ENCODE measurements at regions of chr13 and their contacts with region 1.

Region 1: DNA sequence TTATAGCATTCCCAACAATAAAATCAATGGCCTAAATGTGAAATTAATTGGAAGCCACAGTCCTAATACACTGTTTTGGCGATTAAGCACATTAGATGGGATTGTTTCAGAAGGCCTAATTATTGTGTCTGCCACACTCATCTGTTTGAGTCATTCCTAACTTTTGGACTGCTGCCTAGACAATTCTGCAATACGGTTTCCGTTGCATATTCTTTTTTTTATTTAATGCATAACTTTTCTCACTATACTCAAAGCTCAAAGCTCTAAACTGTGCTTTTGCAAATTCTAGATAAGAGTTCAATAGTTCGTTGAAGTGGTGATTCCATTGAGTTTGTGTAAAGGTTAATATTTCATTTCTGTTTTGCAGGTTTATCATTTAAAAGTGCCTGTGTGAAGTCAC is 53.1 kb downstream of the MBNL2 start:
- DNase-seq: peak; percentile 95
- H3K4me3 Mint-ChIP-seq: peak overlapping the region; percentile 11
- H3K27ac Mint-ChIP-seq: peak overlapping the region; percentile 92
- H3K4me1 Mint-ChIP-seq: peaks cover 65% of the 10 kb centered on the region
- H3K27me3 Mint-ChIP-seq: no peaks in the 10 kb centered on the region
- CTCF ChIP-seq: no peak

Region 2: GRCh38 chr13:96671073-96671472 is 604.2 kb before region 1 on chr13:
- CTCF ChIA-PET with region 1: no interaction called
- POLR2A ChIA-PET with region 1: no interaction called
- intact Hi-C with region 1: no loop called
- DNase-seq: no peak
- H3K4me3 Mint-ChIP-seq: no peak overlapping the region
- H3K27ac Mint-ChIP-seq: peak overlapping the region; percentile 22
- H3K4me1 Mint-ChIP-seq: peaks cover 30% of the 10 kb centered on the region
- H3K27me3 Mint-ChIP-seq: no peaks in the 10 kb centered on the region
- CTCF ChIP-seq: no peak

Region 3: DNA sequence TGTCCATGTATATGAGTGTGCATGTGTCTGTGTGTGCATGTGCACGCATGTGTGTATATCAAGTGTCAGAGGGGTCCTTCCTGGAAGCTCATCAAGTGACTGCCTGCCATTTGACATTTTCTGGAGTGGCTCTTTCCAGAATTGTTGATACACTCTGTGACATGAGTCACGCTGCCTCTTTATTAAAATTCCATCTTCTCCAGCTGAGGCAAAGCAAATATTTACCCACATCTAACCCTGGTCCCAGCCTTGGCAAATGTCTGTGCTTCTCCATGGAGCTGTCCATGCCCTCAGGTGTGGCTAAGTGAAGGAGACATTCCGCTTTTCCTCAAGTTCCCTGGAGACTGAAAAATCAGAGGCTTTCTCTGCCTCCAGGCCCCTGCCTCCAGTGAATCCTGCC is 141.3 kb before region 1 on chr13:
- CTCF ChIA-PET with region 1: no interaction called
- POLR2A ChIA-PET with region 1: no interaction called
- intact Hi-C with region 1: no loop called
- DNase-seq: no peak
- H3K4me3 Mint-ChIP-seq: no peak overlapping the region
- H3K27ac Mint-ChIP-seq: no peak overlapping the region
- H3K4me1 Mint-ChIP-seq: peaks cover 5% of the 10 kb centered on the region
- H3K27me3 Mint-ChIP-seq: peaks cover 11% of the 10 kb centered on the region
- CTCF ChIP-seq: no peak

Region 4: GRCh38 chr13:97249093-97249795 is 26.0 kb before region 1 on chr13:
- CTCF ChIA-PET with region 1: interaction called, 17 read pairs
- POLR2A ChIA-PET with region 1: interaction called, 153 read pairs
- intact Hi-C with region 1: no loop called
- DNase-seq: no peak
- H3K4me3 Mint-ChIP-seq: no peak overlapping the region
- H3K27ac Mint-ChIP-seq: peak overlapping the region; percentile 44
- H3K4me1 Mint-ChIP-seq: peaks cover 21% of the 10 kb centered on the region
- H3K27me3 Mint-ChIP-seq: no peaks in the 10 kb centered on the region
- CTCF ChIP-seq: no peak

Measured in MCF 10A (cell line).